Activated CD4-positive, alpha-beta memory T cell treated with anti-CD3 and anti-CD28 coated beads for 36 hours (primary cell): ENCODE measurements at regions of chr7 and their contacts with region 1.

Region 1: GRCh38 chr7:37311355-37311754 is 137.3 kb downstream of the ELMO1 start:
- DNase-seq: peak; percentile 62
- H3K4me3 Mint-ChIP-seq: peak overlapping the region; percentile 1
- H3K27ac Mint-ChIP-seq: peak overlapping the region; percentile 70
- H3K4me1 Mint-ChIP-seq: peaks cover 65% of the 10 kb centered on the region
- H3K27me3 Mint-ChIP-seq: no peaks in the 10 kb centered on the region

Region 2: DNA sequence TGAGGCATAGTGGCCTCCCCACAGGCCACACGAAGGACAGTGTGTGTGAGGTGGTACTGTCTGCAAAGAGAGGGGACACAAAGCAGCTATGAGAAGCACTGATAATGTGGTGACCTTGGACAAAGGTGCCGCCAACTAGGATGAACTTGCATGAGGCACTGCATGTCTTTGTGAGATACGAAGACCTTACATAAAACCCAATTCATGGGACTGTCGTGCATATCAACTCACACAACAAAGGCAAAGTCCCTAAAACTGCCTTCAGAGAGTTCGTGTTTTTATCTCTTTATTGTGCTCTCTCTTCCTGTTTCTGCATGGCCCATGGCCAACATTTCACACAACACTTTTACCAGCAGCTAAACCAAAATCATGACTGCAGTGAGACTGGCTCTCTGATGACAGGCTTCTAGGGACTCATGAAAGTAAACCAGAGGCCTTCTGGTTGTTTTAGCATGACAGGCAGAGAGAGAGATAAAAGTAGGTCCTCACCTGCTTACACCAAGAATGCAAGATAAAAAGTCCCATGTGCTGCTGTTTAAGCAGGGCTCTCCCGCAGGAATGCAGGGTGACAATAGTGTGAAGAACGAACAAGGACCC is 210.5 kb before region 1 on chr7:
- CTCF ChIA-PET with region 1: no interaction called
- POLR2A ChIA-PET with region 1: no interaction called
- intact Hi-C with region 1: no loop called
- DNase-seq: no peak
- H3K4me3 Mint-ChIP-seq: no peak overlapping the region
- H3K27ac Mint-ChIP-seq: no peak overlapping the region
- H3K4me1 Mint-ChIP-seq: peaks cover 26% of the 10 kb centered on the region
- H3K27me3 Mint-ChIP-seq: no peaks in the 10 kb centered on the region

Region 3: GRCh38 chr7:37277513-37277912 is 33.8 kb before region 1 on chr7:
- CTCF ChIA-PET with region 1: no interaction called
- POLR2A ChIA-PET with region 1: no interaction called
- intact Hi-C with region 1: no loop called
- DNase-seq: no peak
- H3K4me3 Mint-ChIP-seq: no peak overlapping the region
- H3K27ac Mint-ChIP-seq: no peak overlapping the region
- H3K4me1 Mint-ChIP-seq: peaks cover 36% of the 10 kb centered on the region
- H3K27me3 Mint-ChIP-seq: no peaks in the 10 kb centered on the region

Region 4: DNA sequence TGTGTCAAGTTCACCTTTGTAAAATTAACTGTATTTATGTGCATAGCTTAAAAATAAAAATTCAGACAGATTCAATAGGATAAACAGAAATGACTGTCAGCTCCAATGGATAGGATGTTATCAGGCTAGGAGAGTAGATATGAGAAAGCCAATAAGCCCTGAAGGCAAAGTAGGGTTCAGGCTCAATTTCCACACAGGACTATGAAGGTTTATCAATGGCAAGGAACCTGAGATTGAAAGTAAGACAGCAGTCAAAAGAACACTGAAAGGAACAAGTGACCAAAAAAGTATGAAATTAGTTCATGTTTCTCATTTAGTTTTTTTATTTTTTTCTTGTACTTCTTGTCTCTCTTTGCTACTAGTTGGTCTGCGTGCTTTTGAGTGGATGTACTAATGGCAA is 15.9 kb after region 1 on chr7:
- CTCF ChIA-PET with region 1: no interaction called
- POLR2A ChIA-PET with region 1: interaction called, 3 read pairs
- intact Hi-C with region 1: loop called (anchors 1 kb)
- DNase-seq: no peak
- H3K4me3 Mint-ChIP-seq: no peak overlapping the region
- H3K27ac Mint-ChIP-seq: no peak overlapping the region
- H3K4me1 Mint-ChIP-seq: peaks cover 52% of the 10 kb centered on the region
- H3K27me3 Mint-ChIP-seq: no peaks in the 10 kb centered on the region

Region 5: DNA sequence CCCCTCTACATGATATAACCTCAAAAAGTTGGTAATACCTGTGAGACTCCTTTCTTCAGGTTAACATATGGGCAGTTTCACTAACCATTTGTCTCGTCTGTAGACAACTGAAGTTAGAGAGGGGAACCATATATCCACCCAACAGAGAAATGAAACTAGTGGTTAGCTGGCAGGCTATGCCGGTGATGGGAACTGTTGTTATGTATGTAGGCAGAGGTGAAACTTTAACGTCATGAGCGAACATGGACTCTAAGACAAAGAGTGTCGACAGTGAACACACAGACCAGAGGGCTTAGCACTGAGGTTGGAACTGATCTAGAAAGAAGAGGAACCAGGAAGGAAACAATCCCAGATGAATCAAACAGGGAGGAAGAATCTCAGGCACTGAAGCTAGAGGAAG is 24.9 kb after region 1 on chr7:
- CTCF ChIA-PET with region 1: interaction called, 6 read pairs
- POLR2A ChIA-PET with region 1: interaction called, 3 read pairs
- intact Hi-C with region 1: loop called (anchors 1 kb)
- DNase-seq: peak; percentile 71
- H3K4me3 Mint-ChIP-seq: peak overlapping the region; percentile 17
- H3K27ac Mint-ChIP-seq: peak overlapping the region; percentile 76
- H3K4me1 Mint-ChIP-seq: peaks cover 89% of the 10 kb centered on the region
- H3K27me3 Mint-ChIP-seq: no peaks in the 10 kb centered on the region

Region 6: DNA sequence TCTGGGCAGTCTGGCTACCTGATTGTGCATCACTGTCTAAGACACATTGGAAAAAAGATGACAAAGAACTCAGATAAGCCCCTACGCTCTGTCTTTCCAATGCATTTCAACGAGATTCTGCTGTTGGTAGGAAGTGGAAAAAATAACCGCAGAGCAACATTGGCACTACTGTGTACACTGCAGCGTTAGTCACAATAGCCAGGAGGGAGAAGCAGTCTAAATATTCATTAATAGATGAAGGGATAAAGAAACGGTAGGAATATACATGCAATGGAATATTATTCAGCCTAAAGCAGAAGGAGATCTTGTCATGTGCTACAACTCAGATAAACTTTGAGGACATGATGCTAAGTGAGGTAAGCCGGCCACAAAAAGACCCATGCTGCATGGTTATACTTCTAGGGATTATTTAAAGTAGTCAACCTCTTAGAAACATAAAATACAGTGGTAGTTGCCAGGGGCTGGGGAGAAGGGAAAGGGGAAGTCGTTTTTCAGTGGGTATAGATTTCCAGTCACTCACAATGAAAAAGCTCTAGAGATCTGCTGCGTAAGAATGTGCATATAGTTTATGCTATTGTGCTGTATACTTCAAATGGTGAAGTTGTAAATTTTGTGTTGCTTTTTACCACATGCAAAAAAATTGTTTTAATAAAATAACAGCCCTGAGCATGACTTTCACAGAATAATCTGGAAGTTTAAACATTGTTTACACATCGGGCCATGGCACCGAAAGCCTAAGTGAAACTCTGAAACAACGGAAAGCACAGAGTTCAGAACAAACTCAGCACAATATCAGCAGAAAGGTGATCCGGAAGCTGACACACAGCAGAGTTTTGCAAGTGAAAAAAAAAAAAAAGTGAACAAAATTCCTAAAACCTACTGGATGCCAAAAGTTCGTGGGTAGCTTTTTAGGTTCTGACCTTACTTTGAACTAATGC is 97.2 kb after region 1 on chr7:
- CTCF ChIA-PET with region 1: no interaction called
- POLR2A ChIA-PET with region 1: no interaction called
- intact Hi-C with region 1: no loop called
- DNase-seq: peak; percentile 34
- H3K4me3 Mint-ChIP-seq: peak overlapping the region; percentile 70
- H3K27ac Mint-ChIP-seq: peak overlapping the region; percentile 96
- H3K4me1 Mint-ChIP-seq: peaks cover 86% of the 10 kb centered on the region
- H3K27me3 Mint-ChIP-seq: no peaks in the 10 kb centered on the region